CD4-positive, alpha-beta T cell (primary cell): ENCODE measurements at regions of chr5 and their contacts with region 1.

Region 1: GRCh38 chr5:81971712-81972495 is at the start of gene ATG10:
- DNase-seq: peak; percentile 60 to 94 (median 82)
- ATAC-seq: peak; percentile 82
- H3K4me3 ChIP-seq: peak within 1 kb of the TSS; percentile 90
- H3K4me3 Mint-ChIP-seq: peak within 1 kb of the TSS; percentile 98
- H3K27ac ChIP-seq: peak within 1 kb of the TSS; percentile 87 to 98
- H3K27ac Mint-ChIP-seq: peak within 1 kb of the TSS; percentile 96
- H3K4me1 ChIP-seq: peaks cover 5% of the 10 kb centered on the region
- H3K4me1 Mint-ChIP-seq: peaks cover 31% of the 10 kb centered on the region
- H3K27me3 ChIP-seq: no peaks in the 10 kb centered on the region
- H3K27me3 Mint-ChIP-seq: no peaks in the 10 kb centered on the region
- CTCF ChIP-seq: no peak
- total RNA-seq, gene ATG10: 4.7 to 5.3 TPM

Region 2: DNA sequence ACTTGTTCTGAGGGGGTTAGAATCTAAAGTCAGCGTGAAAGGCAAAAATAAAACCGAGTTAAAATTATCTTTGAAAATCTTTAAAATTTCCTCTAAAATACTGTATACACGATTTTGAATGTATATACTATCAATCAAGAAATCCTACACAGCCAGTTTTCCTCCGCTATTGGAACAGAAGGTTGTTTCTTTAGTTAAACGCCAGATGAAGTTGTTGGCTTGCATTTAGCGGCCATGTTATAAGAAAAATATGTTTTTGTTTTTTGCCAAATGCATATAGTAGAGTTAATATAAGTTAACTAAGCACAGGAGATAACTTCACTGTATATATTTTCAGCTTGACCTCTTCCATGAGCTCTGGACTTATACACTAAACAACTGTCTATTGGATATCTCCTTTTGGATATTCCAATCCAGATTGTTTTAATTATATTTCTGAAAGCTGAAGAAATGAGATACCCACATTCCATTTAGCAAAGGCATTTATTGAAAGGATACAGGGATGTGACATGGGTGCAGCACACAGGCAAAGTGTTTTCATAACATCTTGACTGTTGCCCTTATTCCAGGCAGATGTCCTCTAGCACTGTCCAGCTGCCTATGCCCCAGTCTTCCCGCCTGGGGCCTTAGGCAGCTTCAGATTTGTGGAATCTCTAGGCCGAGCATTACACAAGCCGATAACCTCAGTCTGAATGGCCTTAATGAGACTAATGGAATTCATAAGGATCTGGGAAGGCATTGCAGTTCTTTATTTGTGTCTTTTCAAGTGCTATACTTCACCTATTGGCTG is 10.1 kb before region 1 on chr5:
- CTCF ChIA-PET with region 1: no interaction called
- POLR2A ChIA-PET with region 1: no interaction called
- intact Hi-C with region 1: no loop called
- DNase-seq: no peak
- ATAC-seq: no peak
- H3K4me3 ChIP-seq: no peak overlapping the region
- H3K4me3 Mint-ChIP-seq: no peak overlapping the region
- H3K27ac ChIP-seq: no peak overlapping the region
- H3K27ac Mint-ChIP-seq: no peak overlapping the region
- H3K4me1 ChIP-seq: no peaks in the 10 kb centered on the region
- H3K4me1 Mint-ChIP-seq: no peaks in the 10 kb centered on the region
- H3K27me3 ChIP-seq: no peaks in the 10 kb centered on the region
- H3K27me3 Mint-ChIP-seq: no peaks in the 10 kb centered on the region
- CTCF ChIP-seq: no peak

Region 3: DNA sequence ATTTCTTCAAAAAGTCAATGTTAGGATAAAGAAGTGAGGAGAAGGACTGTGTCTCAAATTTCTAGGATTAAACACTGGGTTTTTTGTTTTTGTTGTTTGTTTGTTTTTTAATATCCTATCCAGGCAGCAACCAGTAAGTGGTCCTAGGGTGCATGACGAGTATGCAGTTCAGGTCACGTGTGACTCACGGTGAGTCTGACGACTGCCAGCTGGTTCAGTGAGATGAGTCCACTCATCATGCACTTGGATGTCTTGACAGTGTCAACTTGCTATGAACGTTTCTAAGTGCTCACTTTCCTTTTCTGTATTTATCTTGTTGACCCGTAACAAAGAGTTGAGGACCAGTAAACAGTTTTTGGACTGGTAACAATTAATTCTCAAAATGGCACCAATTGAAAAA is 32.6 kb after region 1 on chr5:
- CTCF ChIA-PET with region 1: no interaction called
- POLR2A ChIA-PET with region 1: interaction called, 4 read pairs
- intact Hi-C with region 1: loop called in 1 of 2 experiments (anchors 2 kb)
- DNase-seq: no peak
- ATAC-seq: no peak
- H3K4me3 ChIP-seq: no peak overlapping the region
- H3K4me3 Mint-ChIP-seq: no peak overlapping the region
- H3K27ac ChIP-seq: no peak overlapping the region
- H3K27ac Mint-ChIP-seq: no peak overlapping the region
- H3K4me1 ChIP-seq: no peaks in the 10 kb centered on the region
- H3K4me1 Mint-ChIP-seq: no peaks in the 10 kb centered on the region
- H3K27me3 ChIP-seq: no peaks in the 10 kb centered on the region
- H3K27me3 Mint-ChIP-seq: no peaks in the 10 kb centered on the region
- CTCF ChIP-seq: no peak